ENCODE measurements at regions of chr9 and their contacts with region 1.

Region 1: GRCh38 chr9:137551651-137552384 is at the start of gene MRPL41:
- DNase-seq: peak; percentile 79 to 95 (median 86)
- ATAC-seq: peak; percentile 84
- H3K4me3 ChIP-seq: peak within 1 kb of the TSS; percentile 59 to 76
- H3K4me3 Mint-ChIP-seq: peak within 1 kb of the TSS; percentile 79
- H3K27ac ChIP-seq: peak within 1 kb of the TSS; percentile 64 to 70
- H3K27ac Mint-ChIP-seq: peak within 1 kb of the TSS; percentile 79
- H3K4me1 ChIP-seq: peaks cover 15% of the 10 kb centered on the region
- H3K4me1 Mint-ChIP-seq: peaks cover 15% of the 10 kb centered on the region
- H3K27me3 ChIP-seq: no peaks in the 10 kb centered on the region
- H3K27me3 Mint-ChIP-seq: no peaks in the 10 kb centered on the region
- CTCF ChIP-seq: no peak
- total RNA-seq, gene MRPL41: 31.8 to 33.5 TPM

Region 2: DNA sequence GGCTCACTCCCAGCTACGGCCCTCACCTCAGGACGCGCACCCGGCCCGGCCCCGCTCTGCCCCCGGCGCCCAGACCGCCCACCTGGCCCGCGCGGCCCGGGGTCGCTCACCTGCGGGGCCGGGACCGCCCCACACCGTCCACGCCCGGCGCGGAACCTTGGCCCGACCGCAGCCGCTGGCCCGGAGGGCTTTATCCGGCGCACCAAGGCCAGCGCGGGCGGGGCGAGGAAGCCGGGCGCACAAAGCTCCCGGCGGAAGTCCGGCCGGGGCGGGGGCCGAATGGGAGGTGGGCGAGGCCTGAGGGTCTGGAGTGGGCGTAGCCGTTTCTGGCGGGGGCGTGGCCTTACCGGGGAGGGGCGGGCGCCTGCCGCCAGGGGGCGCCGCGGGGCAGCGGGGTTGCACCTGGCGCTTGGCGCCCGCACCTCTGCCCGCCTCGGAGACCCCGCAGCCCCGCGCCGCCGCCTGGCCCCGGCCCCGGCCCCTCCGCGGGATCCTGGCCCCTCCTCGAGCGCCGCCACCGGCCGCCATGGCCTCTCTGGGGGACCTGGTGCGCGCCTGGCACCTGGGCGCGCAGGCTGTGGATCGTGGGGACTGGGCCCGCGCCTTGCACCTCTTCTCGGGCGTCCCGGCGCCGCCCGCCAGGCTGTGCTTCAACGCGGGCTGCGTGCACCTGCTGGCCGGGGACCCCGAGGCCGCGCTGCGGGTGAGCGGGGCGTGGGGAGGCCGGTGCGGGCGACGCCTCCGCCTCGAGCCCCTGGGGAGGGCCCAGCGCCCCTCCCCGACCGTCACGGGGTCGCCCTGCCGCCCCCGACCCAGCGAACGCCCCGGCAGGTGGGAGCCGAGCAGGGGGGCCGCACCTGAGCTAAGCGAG is 128.6 kb before region 1 on chr9 and contains the starts of genes EXD3 and NOXA1:
- CTCF ChIA-PET with region 1: no interaction called
- POLR2A ChIA-PET with region 1: interaction called, 5 read pairs
- intact Hi-C with region 1: loop called (anchors 1 kb)
- DNase-seq: peak; percentile 91 to 98 (median 94)
- ATAC-seq: peak; percentile 93
- H3K4me3 ChIP-seq: peak within 1 kb of the TSS; percentile 60 to 72
- H3K4me3 Mint-ChIP-seq: peak within 1 kb of the TSS; percentile 83
- H3K27ac ChIP-seq: peak within 1 kb of the TSS in 1 of 2 experiments; percentile 50
- H3K27ac Mint-ChIP-seq: no peak within 1 kb of the TSS
- H3K4me1 ChIP-seq: peaks cover 17% of the 10 kb centered on the region
- H3K4me1 Mint-ChIP-seq: peaks cover 20% of the 10 kb centered on the region
- H3K27me3 ChIP-seq: no peaks in the 10 kb centered on the region
- H3K27me3 Mint-ChIP-seq: no peaks in the 10 kb centered on the region
- CTCF ChIP-seq: peak; percentile 46
- total RNA-seq, gene EXD3: 9.1 to 11.0 TPM
- total RNA-seq, gene NOXA1: 2.4 to 2.7 TPM

Region 3: GRCh38 chr9:137459147-137459600 is 92.6 kb before region 1 on chr9 and contains the start of gene NSMF:
- CTCF ChIA-PET with region 1: no interaction called
- POLR2A ChIA-PET with region 1: no interaction called
- intact Hi-C with region 1: loop called in 1 of 2 experiments (anchors 2 kb)
- DNase-seq: peak in 8 of 9 experiments; percentile 87 to 97 (median 92)
- ATAC-seq: peak; percentile 71
- H3K4me3 ChIP-seq: peak within 1 kb of the TSS; percentile 49 to 54
- H3K4me3 Mint-ChIP-seq: peak within 1 kb of the TSS; percentile 69
- H3K27ac ChIP-seq: peak within 1 kb of the TSS; percentile 71 to 80
- H3K27ac Mint-ChIP-seq: peak within 1 kb of the TSS; percentile 79
- H3K4me1 ChIP-seq: peaks cover 72% of the 10 kb centered on the region
- H3K4me1 Mint-ChIP-seq: peaks cover 44% of the 10 kb centered on the region
- H3K27me3 ChIP-seq: no peaks in the 10 kb centered on the region
- H3K27me3 Mint-ChIP-seq: no peaks in the 10 kb centered on the region
- CTCF ChIP-seq: no peak
- total RNA-seq, gene NSMF: 82.8 to 87.2 TPM

Region 4: GRCh38 chr9:137578518-137579258 is 26.9 kb after region 1 on chr9 and contains the start of gene DPH7:
- CTCF ChIA-PET with region 1: interaction called, 10 read pairs
- POLR2A ChIA-PET with region 1: interaction called, 5 read pairs
- intact Hi-C with region 1: loop called in 1 of 2 experiments (anchors 1 kb)
- DNase-seq: peak; percentile 91 to 98 (median 96)
- ATAC-seq: peak; percentile 96
- H3K4me3 ChIP-seq: peak within 1 kb of the TSS; percentile 58 to 95
- H3K4me3 Mint-ChIP-seq: peak within 1 kb of the TSS; percentile 81
- H3K27ac ChIP-seq: peak within 1 kb of the TSS; percentile 36 to 57
- H3K27ac Mint-ChIP-seq: peak within 1 kb of the TSS; percentile 67
- H3K4me1 ChIP-seq: peaks cover 24% of the 10 kb centered on the region
- H3K4me1 Mint-ChIP-seq: peaks cover 27% of the 10 kb centered on the region
- H3K27me3 ChIP-seq: no peaks in the 10 kb centered on the region
- H3K27me3 Mint-ChIP-seq: no peaks in the 10 kb centered on the region
- CTCF ChIP-seq: peak; percentile 79
- total RNA-seq, gene DPH7: 47.0 to 49.8 TPM

Region 5: DNA sequence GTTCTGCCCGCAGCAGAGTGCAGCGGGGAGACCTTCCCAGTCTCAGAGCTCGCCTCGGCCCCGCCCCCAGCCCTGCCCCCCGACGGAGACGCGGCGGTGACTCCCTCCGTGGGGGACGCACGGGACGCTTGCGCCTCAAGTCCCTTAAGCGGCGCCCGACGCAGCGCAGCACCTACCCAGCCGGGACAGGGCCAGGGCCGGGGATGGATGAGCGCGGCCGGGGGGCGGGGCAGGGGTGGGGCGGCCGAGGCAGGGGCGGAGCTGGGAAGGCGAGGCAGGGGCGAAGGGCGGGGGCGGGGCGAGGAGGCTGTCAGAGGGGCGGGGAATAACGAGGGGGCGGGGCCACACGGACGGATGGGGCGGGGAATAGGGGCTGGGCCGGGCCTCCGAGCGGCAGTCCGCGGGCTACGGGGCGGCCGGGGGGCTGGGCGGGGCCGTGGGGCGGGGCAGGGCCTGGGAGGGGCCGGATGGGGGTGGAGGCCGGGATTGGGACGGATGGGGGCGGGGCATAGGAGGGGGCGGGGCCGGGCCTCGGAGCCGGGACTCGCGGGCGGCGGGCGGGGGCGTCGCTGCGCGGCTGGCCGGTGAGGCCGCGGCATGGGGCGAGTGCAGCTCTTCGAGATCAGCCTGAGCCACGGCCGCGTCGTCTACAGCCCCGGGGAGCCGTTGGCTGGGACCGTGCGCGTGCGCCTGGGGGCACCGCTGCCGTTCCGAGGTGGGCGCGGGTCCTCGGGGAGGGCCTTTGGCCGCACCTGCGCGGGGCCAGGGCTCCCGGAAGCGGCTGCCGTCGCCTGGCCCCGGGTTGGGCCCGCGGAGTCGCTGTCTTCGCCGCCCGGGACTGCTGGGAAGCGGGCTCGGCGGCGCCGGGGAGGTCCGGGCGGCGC is 53.5 kb after region 1 on chr9 and contains the start of gene ARRDC1:
- CTCF ChIA-PET with region 1: interaction called, 4 read pairs
- POLR2A ChIA-PET with region 1: interaction called, 3 read pairs
- intact Hi-C with region 1: loop called in 1 of 2 experiments (anchors 1 kb)
- DNase-seq: peak; percentile 89 to 97 (median 93)
- ATAC-seq: peak; percentile 81
- H3K4me3 ChIP-seq: peak within 1 kb of the TSS; percentile 46 to 70
- H3K4me3 Mint-ChIP-seq: peak within 1 kb of the TSS; percentile 82
- H3K27ac ChIP-seq: peak within 1 kb of the TSS in 1 of 2 experiments; percentile 52
- H3K27ac Mint-ChIP-seq: peak within 1 kb of the TSS; percentile 80
- H3K4me1 ChIP-seq: peaks cover 15% of the 10 kb centered on the region
- H3K4me1 Mint-ChIP-seq: peaks cover 20% of the 10 kb centered on the region
- H3K27me3 ChIP-seq: no peaks in the 10 kb centered on the region
- H3K27me3 Mint-ChIP-seq: no peaks in the 10 kb centered on the region
- CTCF ChIP-seq: no peak
- total RNA-seq, gene ARRDC1: 30.8 to 35.9 TPM